Sigmoid colon (tissue), 7 donors: ENCODE measurements at regions of chr15 and their contacts with region 1.

Region 1: GRCh38 chr15:64731012-64731806 is 44.2 kb downstream of the RBPMS2 start:
- DNase-seq: peak; percentile 93
- H3K4me3 ChIP-seq: no peak overlapping the region
- H3K27ac ChIP-seq: peak overlapping the region; percentile 45 to 64 (median 56)
- H3K4me1 ChIP-seq: peaks cover 0 to 19% (median 14%) of the 10 kb centered on the region in 4 donors
- H3K27me3 ChIP-seq: no peaks in the 10 kb centered on the region
- CTCF ChIP-seq: peak; percentile 87 to 93 (median 92)
- EP300 ChIP-seq: no peak
- POLR2A ChIP-seq: no peak

Region 2: GRCh38 chr15:64288608-64289398 is 442.4 kb before region 1 on chr15:
- intact Hi-C with region 1: no loop called
- DNase-seq: no peak
- H3K4me3 ChIP-seq: no peak overlapping the region
- H3K27ac ChIP-seq: no peak overlapping the region
- H3K4me1 ChIP-seq: peaks cover 0 to 6% (median 0%) of the 10 kb centered on the region in 4 donors
- H3K27me3 ChIP-seq: no peaks in the 10 kb centered on the region
- CTCF ChIP-seq: no peak
- EP300 ChIP-seq: no peak
- POLR2A ChIP-seq: no peak

Region 3: DNA sequence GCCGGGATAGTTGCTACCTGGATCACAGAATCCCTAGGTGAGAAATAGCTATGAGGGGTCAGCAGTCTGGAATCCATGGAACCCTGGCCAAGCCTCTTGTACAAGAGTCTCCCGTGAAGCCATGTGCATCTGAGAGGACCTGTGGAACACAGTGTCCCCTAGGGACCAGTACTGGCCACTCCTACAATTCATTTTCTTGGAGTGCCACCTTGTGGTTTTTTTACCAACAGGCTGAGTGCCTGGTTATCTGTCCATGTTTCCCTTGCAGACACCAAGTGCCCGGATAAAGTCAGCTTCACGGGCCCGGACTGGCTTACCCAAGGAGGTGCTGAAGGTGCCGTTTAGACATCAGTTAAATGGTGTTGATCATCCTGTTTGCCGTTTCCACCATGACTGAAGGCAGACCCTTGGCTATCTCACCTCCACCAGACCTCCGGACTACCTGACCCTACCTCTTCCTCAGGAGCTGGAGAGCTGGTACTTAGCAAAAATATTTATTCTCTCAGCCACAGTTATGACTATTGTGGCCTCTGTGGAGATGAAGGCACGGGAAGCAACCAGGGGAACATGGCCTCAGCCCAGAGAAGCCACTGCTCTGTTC is 49.7 kb before region 1 on chr15:
- intact Hi-C with region 1: loop called (anchors 1 kb)
- DNase-seq: no peak
- H3K4me3 ChIP-seq: no peak overlapping the region
- H3K27ac ChIP-seq: peak overlapping the region in 2 of 4 donors; percentile 3 to 27
- H3K4me1 ChIP-seq: peaks cover 0 to 15% (median 2%) of the 10 kb centered on the region in 4 donors
- H3K27me3 ChIP-seq: no peaks in the 10 kb centered on the region
- CTCF ChIP-seq: peak; percentile 41 to 85 (median 78)
- EP300 ChIP-seq: no peak
- POLR2A ChIP-seq: no peak

Region 4: DNA sequence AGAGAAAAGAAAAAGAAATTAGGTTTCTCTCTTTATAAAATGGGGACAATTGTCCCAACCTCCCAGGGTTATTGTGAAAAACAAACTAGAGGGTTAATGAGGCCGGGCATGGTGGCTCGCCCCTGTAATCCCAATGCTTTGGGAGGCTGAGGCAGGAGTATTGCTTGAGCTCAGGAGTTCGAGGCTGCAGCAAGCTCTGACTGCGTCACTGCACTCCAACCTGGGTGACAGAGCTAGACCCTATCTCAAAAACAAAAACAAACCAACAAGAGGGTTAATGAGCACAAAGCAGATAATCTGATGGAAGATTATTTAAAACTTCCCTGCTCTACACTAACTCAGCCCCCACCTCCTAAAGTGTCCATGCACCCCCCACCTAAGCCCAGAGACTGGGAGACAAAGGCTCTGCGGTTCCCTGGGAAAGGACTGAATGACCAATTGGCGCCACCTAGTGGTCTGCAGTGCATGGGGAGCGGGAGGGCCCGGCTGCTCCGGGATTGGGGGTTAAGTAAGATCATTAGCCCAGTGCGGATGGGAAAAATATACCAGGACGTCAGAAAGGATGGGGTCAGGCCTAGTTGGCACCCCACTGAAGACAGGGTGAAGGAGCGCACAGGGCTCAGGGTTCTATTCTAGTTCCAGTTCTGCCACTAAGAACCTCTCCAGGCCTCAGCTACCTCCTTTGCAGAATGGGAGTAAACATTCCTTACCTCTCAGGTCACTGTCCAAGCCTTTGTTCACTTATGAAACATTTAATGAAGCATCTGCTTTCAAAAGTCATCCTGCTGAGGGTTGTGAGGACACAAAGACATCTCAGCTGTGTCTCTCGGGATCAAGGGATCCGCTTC is 78.7 kb after region 1 on chr15:
- intact Hi-C with region 1: loop called (anchors 1 kb)
- DNase-seq: peak; percentile 93
- H3K4me3 ChIP-seq: no peak overlapping the region
- H3K27ac ChIP-seq: peak overlapping the region; percentile 89 to 91 (median 90)
- H3K4me1 ChIP-seq: peaks cover 0 to 48% (median 43%) of the 10 kb centered on the region in 4 donors
- H3K27me3 ChIP-seq: no peaks in the 10 kb centered on the region
- CTCF ChIP-seq: peak; percentile 91 to 98 (median 94)
- EP300 ChIP-seq: no peak
- POLR2A ChIP-seq: no peak

Region 5: DNA sequence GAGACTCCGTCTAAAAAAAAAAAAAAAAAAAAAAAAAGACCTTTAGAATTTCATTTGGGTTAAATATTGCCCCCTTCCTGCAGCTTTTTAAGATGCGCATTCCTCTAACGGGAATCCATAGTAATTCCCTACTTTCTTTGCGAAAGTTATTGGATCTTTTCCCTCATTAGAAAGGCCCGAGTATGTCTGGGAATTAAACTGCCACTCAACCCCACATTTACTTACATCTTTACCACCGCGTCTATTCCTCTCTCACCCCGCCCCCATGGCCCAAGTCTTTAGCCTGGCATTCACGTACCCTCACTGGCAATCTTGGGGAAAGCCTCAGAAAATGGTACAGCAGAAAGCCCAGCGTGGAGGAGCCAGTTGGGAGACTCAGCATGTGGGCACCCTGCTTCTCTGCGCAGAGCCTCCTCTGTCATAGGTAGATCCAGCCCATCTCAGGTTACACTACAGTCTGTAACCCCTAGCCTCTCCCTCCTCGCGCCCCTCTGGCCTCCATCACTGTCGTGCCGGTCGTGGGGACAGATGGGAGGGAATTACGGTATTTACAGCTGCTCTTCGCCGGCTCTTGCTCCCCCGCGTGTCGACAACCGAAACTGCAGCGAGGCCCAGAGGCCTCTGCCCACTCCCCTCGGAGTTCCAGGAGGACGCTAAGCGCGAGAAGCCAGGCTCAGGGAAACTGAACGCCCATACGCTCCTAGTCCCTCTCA is 174.1 kb after region 1 on chr15:
- intact Hi-C with region 1: loop called (anchors 1 kb)
- DNase-seq: peak; percentile 89
- H3K4me3 ChIP-seq: peak overlapping the region; percentile 7 to 47 (median 38)
- H3K27ac ChIP-seq: peak overlapping the region in 3 of 4 donors; percentile 28 to 64 (median 41)
- H3K4me1 ChIP-seq: peaks cover 0 to 10% (median 3%) of the 10 kb centered on the region in 4 donors
- H3K27me3 ChIP-seq: no peaks in the 10 kb centered on the region
- CTCF ChIP-seq: peak; percentile 81 to 92 (median 88)
- EP300 ChIP-seq: no peak
- POLR2A ChIP-seq: no peak

Region 6: DNA sequence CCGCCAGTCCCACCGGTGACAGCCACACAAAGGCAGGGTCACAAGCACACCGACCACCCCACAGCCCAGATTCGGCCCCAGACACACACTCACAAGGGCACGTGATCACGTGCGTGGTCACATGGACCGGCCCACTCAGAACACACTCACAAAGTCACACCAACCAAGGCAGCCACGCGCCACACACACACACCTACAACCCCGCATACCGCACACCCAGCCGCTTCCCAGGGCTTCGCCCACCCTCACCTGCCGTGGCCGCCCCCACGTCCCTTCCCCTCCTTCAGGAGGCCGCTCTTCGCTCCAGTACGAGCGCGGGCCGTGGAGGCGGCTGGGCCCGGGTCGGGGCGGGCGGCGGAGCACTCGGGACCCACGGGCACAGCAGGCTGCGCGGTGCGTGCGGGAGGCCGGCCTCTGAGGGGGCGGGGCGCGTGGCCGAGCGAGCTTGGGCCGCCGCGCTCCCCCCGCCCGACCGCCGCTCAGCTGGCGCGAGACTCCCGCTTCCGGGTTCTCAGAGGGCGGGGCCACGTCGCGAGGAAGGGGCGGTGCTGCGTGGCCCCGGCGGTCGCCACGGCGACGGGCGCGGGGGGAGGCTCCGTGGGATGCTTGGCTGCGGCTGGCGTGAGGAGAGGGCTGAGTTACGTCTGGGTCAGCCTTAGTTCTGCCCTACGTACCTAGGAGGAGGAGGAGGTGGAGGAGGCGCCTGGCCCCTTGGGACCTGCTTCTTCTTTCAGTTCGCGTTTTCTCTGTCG is 258.4 kb after region 1 on chr15 and contains the start of gene SPG21:
- intact Hi-C with region 1: loop called (anchors 10 kb)
- DNase-seq: peak; percentile 96
- H3K4me3 ChIP-seq: peak within 1 kb of the TSS; percentile 74 to 100 (median 81)
- H3K27ac ChIP-seq: peak within 1 kb of the TSS; percentile 92 to 99 (median 96)
- H3K4me1 ChIP-seq: peaks cover 0 to 35% (median 27%) of the 10 kb centered on the region in 4 donors
- H3K27me3 ChIP-seq: no peaks in the 10 kb centered on the region
- CTCF ChIP-seq: no peak
- EP300 ChIP-seq: no peak
- POLR2A ChIP-seq: peak in 1 of 2 donors; percentile 54
- total RNA-seq, gene SPG21: 95.7 to 116 (median 103) TPM